ENCODE measurements at regions of chr12 and their contacts with region 1.

Region 1: DNA sequence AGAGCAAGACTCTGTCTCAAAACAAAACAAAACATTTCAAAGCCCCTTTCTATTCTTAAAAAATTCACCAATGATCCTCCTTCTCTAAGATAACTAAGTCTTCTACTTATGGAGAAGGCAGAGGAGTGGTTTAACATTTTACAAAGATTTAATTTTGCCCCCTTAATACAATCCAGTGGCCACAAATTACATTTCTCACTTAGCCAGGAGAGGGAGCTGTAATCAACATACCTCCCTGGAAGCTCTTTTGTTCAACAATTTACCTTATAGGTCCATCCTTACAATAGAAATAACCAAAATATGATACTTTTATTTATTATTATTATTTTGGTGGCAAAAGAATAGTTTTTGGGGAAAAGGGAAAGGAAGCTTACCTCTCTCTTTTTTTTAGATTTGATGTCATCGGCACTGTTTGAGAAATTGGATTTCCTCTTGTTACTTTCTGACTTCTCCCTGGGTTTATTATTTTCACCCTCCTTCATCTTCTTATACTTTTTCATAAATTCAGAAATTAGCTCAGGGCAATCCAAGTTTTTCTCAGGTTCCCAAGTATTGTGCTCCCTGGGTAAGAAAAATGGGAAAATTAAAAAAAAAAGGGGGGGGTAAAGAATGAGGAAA is 28.1 kb downstream of the CBX5 start:
- DNase-seq: no peak
- ATAC-seq: peak; percentile 91
- H3K4me3 ChIP-seq: no peak overlapping the region
- H3K27ac ChIP-seq: no peak overlapping the region
- H3K4me1 ChIP-seq: no peaks in the 10 kb centered on the region
- H3K27me3 ChIP-seq: no peaks in the 10 kb centered on the region
- CTCF ChIP-seq: peak; percentile 53 to 67 (median 64); a peak in 5 of 6 replicates
- EP300 ChIP-seq: no peak
- POLR2A ChIP-seq: no peak
- RAD21 ChIP-seq: peak; percentile 63

Region 2: DNA sequence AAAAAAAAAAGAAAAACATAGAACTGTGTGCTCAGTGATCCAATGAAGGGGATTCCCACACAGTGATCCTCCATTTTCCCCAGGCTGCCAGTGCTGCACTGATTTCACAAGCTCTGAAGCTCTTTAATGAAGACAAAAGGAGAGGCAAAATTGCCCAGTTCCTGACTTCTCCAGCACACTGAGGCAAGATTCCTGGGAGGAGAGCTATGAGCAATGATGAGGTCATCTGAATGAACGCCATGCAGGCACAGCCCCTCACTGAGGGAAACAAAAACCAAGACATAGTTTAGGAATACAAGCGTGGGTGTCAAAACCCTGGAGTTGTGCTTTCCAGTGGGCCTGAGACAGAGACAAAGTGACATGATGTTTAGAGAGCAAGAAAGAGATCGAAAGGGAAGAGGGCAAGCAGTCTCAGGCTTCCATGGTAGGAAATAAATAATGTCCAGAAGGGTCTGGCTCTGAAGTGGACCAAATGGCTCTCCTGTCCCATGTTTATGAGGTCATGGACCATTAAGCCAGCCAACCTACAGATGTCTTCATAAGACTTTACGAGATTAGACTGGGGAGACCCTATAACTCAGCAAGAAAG is 22.1 kb before region 1 on chr12:
- CTCF ChIA-PET with region 1: interaction called, 12 read pairs
- POLR2A ChIA-PET with region 1: no interaction called
- RAD21 ChIA-PET with region 1: no interaction called
- SMC1A ChIA-PET with region 1: interaction called, 4 read pairs
- in situ Hi-C with region 1: no loop called
- intact Hi-C with region 1: no loop called
- DNase-seq: no peak
- ATAC-seq: peak; percentile 81
- H3K4me3 ChIP-seq: no peak overlapping the region
- H3K27ac ChIP-seq: no peak overlapping the region
- H3K4me1 ChIP-seq: peaks cover 5% of the 10 kb centered on the region; the same call in 1 of the 2 replicates
- H3K27me3 ChIP-seq: no peaks in the 10 kb centered on the region
- CTCF ChIP-seq: no peak
- EP300 ChIP-seq: no peak
- POLR2A ChIP-seq: no peak
- RAD21 ChIP-seq: no peak

Region 3: GRCh38 chr12:54279866-54280467 is 28.2 kb after region 1 on chr12 and contains the start of gene CBX5:
- CTCF ChIA-PET with region 1: interaction called, 49 read pairs
- POLR2A ChIA-PET with region 1: interaction called, 16 read pairs
- RAD21 ChIA-PET with region 1: interaction called, 33 read pairs
- SMC1A ChIA-PET with region 1: interaction called, 32 read pairs
- in situ Hi-C with region 1: no loop called
- intact Hi-C with region 1: no loop called
- DNase-seq: peak; percentile 98
- ATAC-seq: peak; percentile 48
- H3K4me3 ChIP-seq: peak within 1 kb of the TSS; percentile 81
- H3K27ac ChIP-seq: peak within 1 kb of the TSS; percentile 99
- H3K4me1 ChIP-seq: peaks cover 18% of the 10 kb centered on the region
- H3K27me3 ChIP-seq: no peaks in the 10 kb centered on the region
- CTCF ChIP-seq: no peak
- EP300 ChIP-seq: no peak
- POLR2A ChIP-seq: peak; percentile 83
- RAD21 ChIP-seq: no peak
- polyA plus RNA-seq, gene CBX5: 66.9 to 67.1 TPM

Region 4: DNA sequence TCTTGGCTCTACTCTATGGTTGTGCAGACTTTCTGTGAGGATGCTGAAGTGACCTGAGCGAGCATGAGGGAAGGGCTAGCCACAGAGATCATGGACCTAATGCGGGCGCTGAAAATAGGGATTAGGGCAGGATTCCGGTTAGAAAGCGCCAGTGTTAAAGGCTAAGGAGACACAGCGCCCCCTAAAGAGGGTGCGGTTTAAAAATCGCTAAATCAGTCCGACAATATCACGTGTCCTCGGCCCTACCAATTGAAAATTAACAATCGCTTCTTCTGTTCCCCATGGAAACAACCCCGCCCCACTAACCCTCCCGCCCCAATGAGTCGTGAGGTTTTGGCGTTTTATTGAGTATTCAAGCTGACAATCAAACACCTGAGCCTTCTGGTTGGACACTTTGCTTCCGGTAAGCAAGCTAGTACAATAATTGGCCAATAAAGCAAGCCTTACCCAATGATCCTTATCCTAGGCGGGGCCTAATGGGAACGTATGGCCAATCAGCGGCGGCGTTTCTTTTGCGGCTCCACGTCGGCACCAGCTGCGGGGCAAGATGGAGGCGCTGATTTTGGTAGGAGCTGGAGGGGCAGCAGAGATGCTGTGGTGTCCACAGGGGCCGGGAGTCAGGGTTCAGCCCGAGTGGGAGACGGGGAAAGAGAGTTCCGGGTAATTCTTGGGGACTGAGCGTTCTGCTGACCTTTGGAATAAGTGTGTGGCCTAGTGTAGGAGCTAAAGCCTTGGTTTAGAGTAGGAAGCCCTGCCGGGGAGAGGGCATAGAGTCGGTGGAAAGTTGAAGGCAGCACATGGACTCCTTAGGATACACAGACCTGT is 73.1 kb after region 1 on chr12 and contains the start of gene COPZ1:
- CTCF ChIA-PET with region 1: interaction called, 34 read pairs
- POLR2A ChIA-PET with region 1: interaction called, 4 read pairs
- RAD21 ChIA-PET with region 1: interaction called, 23 read pairs
- SMC1A ChIA-PET with region 1: interaction called, 10 read pairs
- in situ Hi-C with region 1: no loop called
- intact Hi-C with region 1: no loop called
- DNase-seq: peak; percentile 99
- ATAC-seq: peak; percentile 99
- H3K4me3 ChIP-seq: peak within 1 kb of the TSS; percentile 98
- H3K27ac ChIP-seq: peak within 1 kb of the TSS; percentile 84
- H3K4me1 ChIP-seq: no peaks in the 10 kb centered on the region; the same call in 1 of the 2 replicates
- H3K27me3 ChIP-seq: no peaks in the 10 kb centered on the region
- CTCF ChIP-seq: peak; percentile 73 to 88 (median 77)
- EP300 ChIP-seq: no peak
- POLR2A ChIP-seq: peak; percentile 91
- RAD21 ChIP-seq: peak; percentile 52; the same call in 1 of the 2 replicates
- polyA plus RNA-seq, gene COPZ1: 260 to 378 TPM

Region 5: GRCh38 chr12:54368709-54369583 is 117.2 kb after region 1 on chr12:
- CTCF ChIA-PET with region 1: interaction called, 68 read pairs
- POLR2A ChIA-PET with region 1: interaction called, 4 read pairs
- RAD21 ChIA-PET with region 1: interaction called, 9 read pairs
- SMC1A ChIA-PET with region 1: interaction called, 12 read pairs
- in situ Hi-C with region 1: no loop called
- intact Hi-C with region 1: loop called (anchors 1 kb)
- DNase-seq: no peak
- ATAC-seq: peak; percentile 92
- H3K4me3 ChIP-seq: no peak overlapping the region
- H3K27ac ChIP-seq: no peak overlapping the region
- H3K4me1 ChIP-seq: peaks cover 24% of the 10 kb centered on the region
- H3K27me3 ChIP-seq: no peaks in the 10 kb centered on the region
- CTCF ChIP-seq: peak; percentile 91 to 99 (median 98); a peak in 5 of 6 replicates
- EP300 ChIP-seq: no peak
- POLR2A ChIP-seq: no peak
- RAD21 ChIP-seq: peak; percentile 93

Measured in GM12878 (cell line).